Cardiac septum (tissue), 1 donor: ENCODE measurements at regions of chr11 and their contacts with region 1.

Region 1: GRCh38 chr11:118198370-118198769 is 21.9 kb upstream of the SCN2B start:
- DNase-seq: peak; percentile 89

Region 2: DNA sequence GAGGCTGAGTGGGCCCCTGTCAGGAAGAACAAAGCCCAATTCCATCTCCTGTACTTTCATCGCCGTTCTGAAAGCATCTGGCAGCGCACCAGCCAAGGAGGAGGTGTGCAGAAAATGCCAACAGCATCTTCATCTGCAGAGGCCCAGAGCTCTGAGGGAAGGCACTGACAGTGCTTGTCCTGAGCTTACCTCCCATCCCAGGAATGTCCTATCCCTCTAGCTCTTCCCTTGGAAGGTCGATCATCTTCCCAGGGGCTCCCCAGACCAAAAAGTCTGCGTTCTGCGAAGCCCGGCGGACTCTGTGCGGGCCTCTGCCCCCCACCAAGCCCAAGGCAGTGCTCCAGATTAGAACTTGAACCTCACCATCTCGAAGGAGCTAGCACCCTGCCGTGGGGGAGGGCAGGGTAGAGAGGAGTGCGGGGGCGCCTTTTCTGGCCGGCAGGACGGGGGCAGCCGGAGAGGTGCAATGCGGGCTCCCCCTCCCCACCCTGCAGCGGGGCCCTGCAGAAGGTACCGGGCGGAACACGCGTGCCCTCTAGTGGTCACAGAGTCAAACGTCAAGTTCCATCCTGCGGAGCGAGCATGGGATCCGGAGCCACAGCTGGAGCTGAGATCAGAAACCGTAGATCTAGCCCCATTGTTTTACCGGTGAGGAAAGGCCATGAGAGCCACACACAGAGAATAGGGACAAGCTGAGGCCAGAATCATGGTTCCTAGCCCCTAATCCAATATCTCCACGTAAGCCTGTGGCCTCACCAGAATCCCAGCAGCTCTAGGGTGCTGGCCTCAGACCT is 26.9 kb before region 1 on chr11:
- intact Hi-C with region 1: loop called (anchors 1 kb)
- DNase-seq: peak; percentile 91

Region 3: DNA sequence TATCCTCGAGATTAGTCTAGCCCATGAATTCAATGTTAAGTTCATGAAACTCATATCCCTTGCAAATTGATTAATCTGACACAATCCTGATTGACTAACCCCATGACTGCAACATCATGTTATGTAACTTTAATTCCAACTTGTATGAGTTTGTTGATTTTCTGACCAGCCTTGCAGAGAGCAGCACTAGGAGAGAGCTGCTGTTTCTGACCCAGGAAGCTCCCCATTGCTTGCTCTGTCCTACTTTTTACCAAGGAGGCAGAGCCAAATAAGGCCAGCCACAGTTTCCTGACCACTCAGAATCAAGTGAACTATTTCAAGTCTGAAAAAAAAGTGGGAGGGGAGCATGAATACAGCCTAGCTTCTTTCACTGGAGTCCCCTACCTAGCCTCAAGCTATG is 40.6 kb after region 1 on chr11:
- intact Hi-C with region 1: loop called (anchors 5 kb)
- DNase-seq: no peak

Region 4: GRCh38 chr11:118290923-118291322 is 92.6 kb after region 1 on chr11:
- intact Hi-C with region 1: loop called (anchors 2 kb)
- DNase-seq: no peak

Region 5: DNA sequence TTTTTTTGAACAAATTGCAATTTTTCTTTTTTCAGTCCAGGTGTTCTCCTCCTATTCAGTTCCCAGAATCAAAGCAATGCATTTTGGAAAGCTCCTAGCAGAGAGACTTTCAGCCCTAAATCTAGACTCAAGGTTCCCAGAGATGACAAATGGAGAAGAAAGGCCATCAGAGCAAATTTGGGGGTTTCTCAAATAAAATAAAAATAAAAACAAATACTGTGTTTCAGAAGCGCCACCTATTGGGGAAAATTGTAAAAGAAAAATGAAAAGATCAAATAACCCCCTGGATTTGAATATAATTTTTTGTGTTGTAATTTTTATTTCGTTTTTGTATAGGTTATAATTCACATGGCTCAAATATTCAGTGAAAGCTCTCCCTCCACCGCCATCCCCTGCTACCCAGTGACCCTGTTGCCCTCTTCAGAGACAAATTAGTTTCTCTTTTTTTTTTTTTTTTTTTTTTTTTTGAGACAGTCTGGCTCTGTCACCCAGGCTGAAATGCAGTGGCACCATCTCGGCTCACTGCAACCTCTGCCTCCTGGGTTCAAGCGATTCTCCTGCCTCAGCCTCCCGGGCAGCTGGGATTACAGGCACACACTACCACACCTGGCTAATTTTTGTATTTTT is 154.8 kb after region 1 on chr11:
- intact Hi-C with region 1: loop called (anchors 2 kb)
- DNase-seq: no peak

Region 6: DNA sequence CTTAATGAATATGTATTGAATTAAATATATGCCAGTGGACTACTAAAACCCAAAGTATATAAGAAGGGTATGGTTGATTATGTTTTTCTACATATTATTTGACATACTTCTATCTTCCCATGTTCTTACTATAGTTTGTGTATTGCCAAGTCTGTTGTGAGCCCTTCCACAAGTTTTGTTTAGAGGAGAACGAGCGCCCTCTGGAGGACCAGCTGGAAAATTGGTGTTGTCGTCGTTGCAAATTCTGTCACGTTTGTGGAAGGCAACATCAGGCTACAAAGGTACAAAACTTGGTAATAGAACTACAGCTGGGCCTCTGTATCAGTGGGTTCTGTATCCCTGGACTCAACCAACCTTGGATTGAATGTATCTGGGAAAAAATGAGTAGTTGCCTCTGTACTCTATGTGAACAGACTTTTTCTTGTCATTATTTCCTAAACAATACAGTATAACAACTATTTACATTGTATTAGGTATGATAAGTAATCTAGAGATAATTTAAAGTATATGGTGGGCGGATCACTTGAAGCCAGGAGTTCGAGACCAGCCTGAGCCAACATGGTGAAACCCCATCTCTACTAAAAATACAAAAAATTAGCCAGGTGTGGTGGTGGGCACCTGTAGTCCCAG is 290.2 kb after region 1 on chr11:
- intact Hi-C with region 1: loop called (anchors 10 kb)
- DNase-seq: no peak